OCI-LY7 (cell line): ENCODE measurements at regions of chr19 and their contacts with region 1.

Region 1: DNA sequence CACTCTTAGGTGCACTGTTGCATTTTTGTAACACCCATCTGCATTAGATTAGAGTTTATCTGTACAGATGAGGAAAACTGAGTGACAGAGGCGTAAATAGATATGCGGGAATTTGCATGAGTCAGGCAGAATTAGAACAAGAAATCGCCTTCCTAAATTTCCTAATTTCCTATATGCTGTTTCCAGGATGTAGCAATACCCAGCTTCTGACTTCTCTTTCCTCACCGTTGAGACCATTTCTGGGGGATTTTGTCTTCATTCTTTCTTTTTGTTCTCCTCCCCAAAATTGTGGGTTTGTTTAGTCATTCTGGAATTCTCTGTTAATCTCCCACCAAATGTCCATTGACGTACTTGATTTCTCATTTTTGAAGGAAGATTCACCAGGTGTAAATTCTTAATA is 10.6 kb upstream of the ZNF792 start:
- DNase-seq: no peak
- H3K4me3 ChIP-seq: no peak overlapping the region
- H3K27ac ChIP-seq: no peak overlapping the region
- H3K4me1 ChIP-seq: peaks cover 8% of the 10 kb centered on the region
- CTCF ChIP-seq: no peak

Region 2: GRCh38 chr19:34904846-34905527 is 69.7 kb before region 1 on chr19:
- CTCF ChIA-PET with region 1: no interaction called
- POLR2A ChIA-PET with region 1: no interaction called
- intact Hi-C with region 1: no loop called
- DNase-seq: no peak
- H3K4me3 ChIP-seq: no peak overlapping the region
- H3K27ac ChIP-seq: no peak overlapping the region
- H3K4me1 ChIP-seq: no peaks in the 10 kb centered on the region
- CTCF ChIP-seq: no peak

Region 3: GRCh38 chr19:35002037-35002535 is 27.4 kb after region 1 on chr19:
- CTCF ChIA-PET with region 1: no interaction called
- POLR2A ChIA-PET with region 1: no interaction called
- intact Hi-C with region 1: loop called (anchors 2 kb)
- DNase-seq: no peak
- H3K4me3 ChIP-seq: peak overlapping the region; percentile 73
- H3K27ac ChIP-seq: peak overlapping the region; percentile 88
- H3K4me1 ChIP-seq: peaks cover 57% of the 10 kb centered on the region
- CTCF ChIP-seq: no peak

Region 4: DNA sequence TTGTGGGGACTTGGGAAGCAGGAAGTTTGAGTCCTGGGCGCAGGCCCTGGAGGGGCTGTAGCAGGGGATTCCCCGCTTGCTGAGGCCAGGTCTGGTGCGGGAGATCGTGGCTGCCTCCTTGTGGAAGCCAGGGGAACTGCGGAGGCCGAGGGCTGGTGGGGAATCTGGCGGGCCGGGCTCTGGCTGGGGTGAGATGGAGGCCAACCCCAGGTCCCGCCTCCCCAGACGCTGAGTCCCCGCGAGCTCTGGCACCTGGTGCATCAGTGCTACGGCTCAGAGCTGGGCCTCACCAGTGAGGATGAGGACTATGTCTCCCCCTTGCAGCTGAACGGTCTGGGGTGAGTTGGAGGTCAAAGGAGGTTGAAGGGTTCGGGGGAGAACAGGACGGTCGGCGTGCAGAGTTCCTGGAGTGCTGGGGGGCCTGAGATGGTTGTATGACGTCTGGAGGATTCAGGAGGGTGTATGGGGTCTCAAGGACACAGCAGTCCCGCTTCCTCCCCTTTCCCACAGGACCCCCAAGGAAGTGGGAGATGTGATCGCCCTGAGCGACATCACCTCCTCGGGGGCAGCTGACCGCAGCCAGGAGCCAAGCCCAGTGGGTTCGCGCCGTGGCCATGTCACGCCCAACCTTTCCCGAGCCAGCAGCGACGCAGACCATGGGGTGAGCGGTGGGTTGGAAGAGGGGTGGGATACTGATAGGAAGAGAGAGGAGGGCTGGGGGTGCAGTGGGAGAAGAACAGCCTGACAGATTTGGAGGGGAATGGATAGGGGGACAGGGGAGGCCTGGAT is 38.6 kb after region 1 on chr19:
- CTCF ChIA-PET with region 1: no interaction called
- POLR2A ChIA-PET with region 1: no interaction called
- intact Hi-C with region 1: loop called (anchors 1 kb)
- DNase-seq: peak; percentile 62
- H3K4me3 ChIP-seq: no peak overlapping the region
- H3K27ac ChIP-seq: no peak overlapping the region
- H3K4me1 ChIP-seq: no peaks in the 10 kb centered on the region
- CTCF ChIP-seq: peak; percentile 85

Region 5: GRCh38 chr19:35044317-35045117 is 69.9 kb after region 1 on chr19:
- CTCF ChIA-PET with region 1: no interaction called
- POLR2A ChIA-PET with region 1: no interaction called
- intact Hi-C with region 1: loop called (anchors 2 kb)
- DNase-seq: peak; percentile 56
- H3K4me3 ChIP-seq: no peak overlapping the region
- H3K27ac ChIP-seq: no peak overlapping the region
- H3K4me1 ChIP-seq: peaks cover 11% of the 10 kb centered on the region
- CTCF ChIP-seq: peak; percentile 99

Region 6: DNA sequence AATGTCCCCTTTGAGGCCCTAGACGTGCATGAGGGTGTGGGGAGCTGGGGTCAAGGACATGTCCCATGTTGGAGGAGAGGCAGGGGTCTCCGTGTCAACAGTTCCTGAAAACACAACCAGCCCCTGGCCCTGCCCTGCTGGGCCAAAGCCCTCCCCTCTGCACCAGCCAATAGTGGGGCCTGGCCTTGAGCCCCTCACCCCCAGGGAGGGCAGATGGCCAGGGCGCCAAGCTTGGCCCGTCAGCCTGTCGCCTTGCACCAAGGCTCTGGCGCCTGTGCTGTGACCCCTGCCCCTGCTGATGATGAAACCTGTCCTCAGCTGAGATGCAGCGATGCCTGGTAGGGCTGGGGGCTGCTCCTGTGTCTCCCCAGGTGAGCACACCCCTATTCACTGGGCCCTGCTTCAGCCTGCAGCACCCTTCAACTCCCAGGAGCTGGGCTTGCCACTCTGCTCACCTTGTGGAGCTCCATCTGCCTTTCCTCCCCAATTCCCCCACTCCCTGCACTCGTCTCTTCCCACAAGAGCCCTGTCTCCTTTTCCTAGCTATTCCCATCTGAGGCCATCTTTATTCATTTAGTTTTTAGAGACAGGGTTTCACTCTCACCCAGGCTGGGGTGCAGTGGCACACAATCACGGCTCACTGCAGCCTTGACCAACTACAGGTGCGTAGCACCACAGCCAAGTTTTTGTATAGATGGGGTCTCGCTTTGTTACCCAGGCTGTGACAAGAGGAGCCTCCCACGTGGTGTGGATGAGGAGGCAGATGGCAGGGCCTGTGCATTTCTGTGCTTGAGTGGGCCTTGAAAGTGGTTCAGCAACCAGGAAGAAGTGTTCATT is 305.6 kb after region 1 on chr19:
- CTCF ChIA-PET with region 1: no interaction called
- POLR2A ChIA-PET with region 1: no interaction called
- intact Hi-C with region 1: no loop called
- DNase-seq: peak; percentile 39
- H3K4me3 ChIP-seq: no peak overlapping the region
- H3K27ac ChIP-seq: peak overlapping the region; percentile 17
- H3K4me1 ChIP-seq: peaks cover 18% of the 10 kb centered on the region
- CTCF ChIP-seq: no peak